ENCODE measurements at regions of chr2 and their contacts with region 1.

Region 1: GRCh38 chr2:32264422-32265105 is at the start of gene NLRC4:
- DNase-seq: no peak
- ATAC-seq: peak; percentile 22
- H3K4me3 ChIP-seq: peak within 1 kb of the TSS; percentile 19 to 45 (median 22)
- H3K27ac ChIP-seq: peak within 1 kb of the TSS; percentile 9
- H3K4me1 ChIP-seq: peaks cover 39% of the 10 kb centered on the region
- H3K27me3 ChIP-seq: no peaks in the 10 kb centered on the region; a peak in 1 of 5 replicates
- CTCF ChIP-seq: no peak
- EP300 ChIP-seq: no peak
- POLR2A ChIP-seq: no peak
- RAD21 ChIP-seq: no peak
- total RNA-seq, gene NLRC4: 0.06 and 0.15 TPM in 2 replicates

Region 2: DNA sequence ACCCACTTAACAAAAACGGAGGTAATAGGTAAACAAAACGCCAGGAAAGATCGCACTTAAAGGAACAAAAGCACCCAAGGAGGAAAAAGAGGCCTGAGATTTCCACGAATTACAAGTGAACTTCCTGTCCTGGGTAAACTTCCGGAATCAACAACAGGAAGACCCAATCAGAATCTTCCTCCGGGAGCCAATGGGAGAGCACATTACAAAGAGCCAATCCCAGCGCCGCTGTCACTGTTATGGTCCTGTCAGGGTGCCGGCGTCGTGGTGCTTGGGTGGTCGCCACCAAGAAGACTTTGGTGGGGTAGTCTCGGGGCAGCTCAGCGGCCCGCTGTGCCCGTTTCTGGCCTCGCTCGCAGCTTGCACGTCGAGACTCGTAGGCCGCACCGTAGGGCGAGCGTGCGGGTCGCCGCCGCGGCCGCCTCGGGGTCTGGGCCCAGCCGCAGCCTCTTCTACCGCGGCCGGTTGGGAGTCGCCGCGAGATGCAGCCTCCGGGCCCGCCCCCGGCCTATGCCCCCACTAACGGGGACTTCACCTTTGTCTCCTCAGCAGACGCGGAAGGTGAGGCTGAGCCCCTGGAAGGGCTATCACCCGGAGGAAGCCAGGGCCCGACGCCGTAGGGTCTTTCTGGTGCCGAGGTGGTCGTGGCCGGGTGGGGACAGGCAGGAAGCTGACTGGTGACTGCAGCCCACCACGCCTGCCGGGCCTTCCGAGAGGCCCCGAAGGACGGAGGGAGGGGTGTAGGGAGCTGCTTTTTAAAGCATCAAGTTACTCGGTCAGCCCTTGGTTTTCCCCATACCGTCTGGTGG is 13.3 kb after region 1 on chr2 and contains the start of gene YIPF4:
- CTCF ChIA-PET with region 1: no interaction called
- POLR2A ChIA-PET with region 1: interaction called, 11 read pairs
- in situ Hi-C with region 1: no loop called
- intact Hi-C with region 1: no loop called
- DNase-seq: peak; percentile 96
- ATAC-seq: peak; percentile 98
- H3K4me3 ChIP-seq: peak within 1 kb of the TSS; percentile 91 to 98 (median 93)
- H3K27ac ChIP-seq: peak within 1 kb of the TSS; percentile 80
- H3K4me1 ChIP-seq: peaks cover 42% of the 10 kb centered on the region
- H3K27me3 ChIP-seq: no peaks in the 10 kb centered on the region; a peak in 1 of 5 replicates
- CTCF ChIP-seq: no peak
- EP300 ChIP-seq: no peak; a peak in 1 of 4 replicates
- POLR2A ChIP-seq: peak; percentile 77 to 86
- RAD21 ChIP-seq: peak; percentile 72
- total RNA-seq, gene YIPF4: 39.1 and 43.9 TPM in 2 replicates